SK-N-SH (cell line): ENCODE measurements at regions of chr10 and their contacts with region 1.

Region 1: DNA sequence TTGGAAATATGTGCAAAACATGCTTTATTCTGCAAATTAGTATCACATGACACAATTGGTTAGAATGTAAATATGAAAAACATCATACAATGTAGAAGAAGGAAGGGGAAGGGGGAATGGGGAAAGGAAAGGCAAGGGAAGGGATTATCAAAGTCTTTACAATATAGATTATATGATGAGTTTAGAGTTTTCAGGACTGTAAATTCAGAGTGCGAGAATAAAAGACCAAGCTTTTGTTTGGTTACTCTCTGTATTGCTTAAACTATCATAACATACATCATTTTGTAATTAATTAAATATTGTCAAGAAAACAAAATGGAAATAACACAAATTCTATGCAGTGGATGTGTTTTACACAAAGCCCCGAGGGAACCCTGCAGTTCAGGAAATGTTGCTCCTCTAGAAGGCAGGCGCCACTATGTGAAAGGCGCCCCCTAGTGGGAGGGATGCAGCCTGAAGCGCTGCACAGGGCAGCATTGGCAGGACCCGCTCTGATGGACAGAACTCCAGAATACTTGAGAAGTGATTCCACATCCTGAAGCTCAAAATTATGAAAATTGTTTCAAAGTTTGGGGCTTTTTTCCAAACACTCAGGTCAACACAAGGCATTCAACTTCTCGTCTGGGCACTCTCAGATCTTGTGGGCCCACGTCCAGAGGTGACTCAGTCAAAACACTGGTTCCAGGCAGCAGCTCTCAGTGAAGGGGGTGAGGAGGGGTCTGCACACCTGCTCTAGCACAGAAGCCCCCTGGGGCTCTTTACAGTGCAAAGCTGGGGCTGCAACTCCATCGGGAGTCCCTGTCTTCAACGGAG is 31.6 kb upstream of the TMEM254 start:
- DNase-seq: peak; percentile 63
- H3K4me3 ChIP-seq: peak overlapping the region in 1 of 2 experiments; percentile 39; a peak in 1 of 4 replicates
- H3K27ac ChIP-seq: no peak overlapping the region
- H3K4me1 ChIP-seq: no peaks in the 10 kb centered on the region
- H3K27me3 ChIP-seq: no peaks in the 10 kb centered on the region
- CTCF ChIP-seq: peak; percentile 83
- EP300 ChIP-seq: no peak
- RAD21 ChIP-seq: peak; percentile 66

Region 2: DNA sequence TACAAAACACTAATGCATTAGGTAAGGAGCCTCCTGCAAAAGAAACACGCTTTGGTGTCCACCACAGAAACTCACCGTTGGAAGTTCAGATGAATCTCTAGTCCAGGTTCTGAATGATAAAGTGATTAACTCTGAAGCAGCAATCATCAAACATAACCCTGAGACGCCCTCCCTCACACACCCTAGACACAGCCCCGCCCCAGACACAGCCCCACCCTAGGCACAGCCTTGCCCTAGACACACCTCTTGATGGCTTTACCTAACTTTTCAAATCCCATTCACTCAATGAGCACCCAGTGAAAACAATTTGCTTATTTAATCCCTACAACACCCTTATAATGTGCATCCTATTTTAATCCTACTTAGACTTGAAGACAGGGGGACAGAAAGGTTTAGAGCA is 10.3 kb after region 1 on chr10:
- CTCF ChIA-PET with region 1: interaction called, 13 read pairs
- POLR2A ChIA-PET with region 1: no interaction called
- DNase-seq: no peak
- H3K4me3 ChIP-seq: no peak overlapping the region
- H3K27ac ChIP-seq: no peak overlapping the region
- H3K4me1 ChIP-seq: no peaks in the 10 kb centered on the region
- H3K27me3 ChIP-seq: no peaks in the 10 kb centered on the region
- CTCF ChIP-seq: no peak
- EP300 ChIP-seq: no peak
- RAD21 ChIP-seq: no peak

Region 3: DNA sequence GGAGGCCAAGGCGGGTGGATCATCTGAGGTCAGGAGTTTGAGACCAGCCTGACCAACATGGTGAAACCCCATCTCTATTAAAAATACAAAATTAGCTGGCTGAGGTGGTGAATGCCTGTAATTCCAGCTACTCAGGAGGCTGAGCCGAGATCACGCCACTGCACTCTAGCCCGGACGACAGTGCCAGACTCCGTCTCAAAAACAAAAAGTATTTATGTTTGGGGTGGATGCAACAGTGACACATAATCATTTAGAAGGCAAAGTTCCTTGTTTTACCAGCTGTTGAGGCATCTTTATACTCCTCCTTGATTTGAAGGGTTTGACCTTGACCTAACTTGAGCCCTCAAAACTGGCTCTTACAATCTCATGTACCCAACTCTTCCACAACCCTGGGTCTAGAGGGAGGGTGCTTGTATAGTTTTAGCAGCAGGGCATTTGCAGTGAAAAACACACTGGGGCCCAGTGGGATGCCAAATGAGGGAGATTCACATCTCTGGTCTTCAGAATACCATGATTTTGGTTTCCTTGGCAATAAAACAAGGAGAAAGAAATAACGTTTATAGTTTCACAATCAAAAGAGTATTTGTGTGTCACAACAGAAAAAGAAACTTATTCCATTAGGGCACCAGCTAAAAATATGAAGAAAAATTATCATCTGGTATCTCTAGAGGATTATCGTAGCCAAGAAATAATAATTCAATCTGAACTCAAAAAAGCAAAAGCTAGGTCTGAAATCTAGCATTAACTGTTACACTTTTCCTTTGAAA is 17.5 kb after region 1 on chr10:
- CTCF ChIA-PET with region 1: interaction called, 18 read pairs
- POLR2A ChIA-PET with region 1: no interaction called
- DNase-seq: no peak
- H3K4me3 ChIP-seq: no peak overlapping the region
- H3K27ac ChIP-seq: no peak overlapping the region
- H3K4me1 ChIP-seq: no peaks in the 10 kb centered on the region
- H3K27me3 ChIP-seq: no peaks in the 10 kb centered on the region
- CTCF ChIP-seq: no peak
- EP300 ChIP-seq: no peak
- RAD21 ChIP-seq: no peak

Region 4: DNA sequence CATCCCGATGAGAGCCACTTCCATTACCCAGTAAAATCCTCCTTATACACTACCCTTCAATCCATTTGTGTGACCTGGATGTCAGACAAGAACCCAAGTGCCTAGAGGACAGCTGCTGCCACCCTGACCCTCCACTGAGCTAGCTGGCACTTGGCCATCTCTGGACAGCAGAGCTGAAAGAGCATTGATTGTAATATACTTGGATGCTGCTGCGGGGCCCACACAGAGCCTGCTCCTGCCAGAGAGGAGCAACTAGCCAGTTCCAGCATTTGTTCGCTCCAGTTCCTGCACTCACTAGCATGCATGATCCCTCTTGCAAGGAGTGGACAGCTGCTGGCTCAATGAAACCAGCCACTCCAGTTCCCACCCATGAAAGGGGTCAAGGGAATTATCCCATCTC is 23.2 kb after region 1 on chr10:
- CTCF ChIA-PET with region 1: interaction called, 18 read pairs
- POLR2A ChIA-PET with region 1: no interaction called
- DNase-seq: no peak
- H3K4me3 ChIP-seq: no peak overlapping the region
- H3K27ac ChIP-seq: no peak overlapping the region
- H3K4me1 ChIP-seq: no peaks in the 10 kb centered on the region
- H3K27me3 ChIP-seq: no peaks in the 10 kb centered on the region; the same call in 1 of the 2 replicates
- CTCF ChIP-seq: no peak
- EP300 ChIP-seq: no peak
- RAD21 ChIP-seq: no peak